PC-9 (cell line): ENCODE measurements at regions of chr13 and their contacts with region 1.

Region 1: DNA sequence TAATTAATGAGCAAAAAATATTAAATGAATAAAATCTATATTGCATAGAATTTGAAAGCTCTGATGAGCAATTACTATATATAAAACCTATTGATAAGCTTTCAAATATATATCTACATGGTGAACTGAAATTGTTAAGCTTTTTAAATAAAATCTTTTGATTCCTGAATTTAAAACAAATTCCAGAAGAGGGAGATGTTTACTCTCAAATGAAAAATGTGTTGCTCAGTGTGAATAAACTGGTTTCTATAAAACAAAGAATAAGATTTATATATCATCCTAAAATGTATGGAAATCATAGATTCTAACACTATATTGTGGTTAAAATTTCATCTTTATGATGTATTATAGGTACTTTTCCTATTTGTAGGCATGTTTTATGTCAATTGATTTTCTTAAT is 171.5 kb upstream of the SLITRK6 start:
- DNase-seq: no peak
- H3K4me3 ChIP-seq: no peak overlapping the region
- H3K27ac ChIP-seq: no peak overlapping the region
- H3K4me1 ChIP-seq: no peaks in the 10 kb centered on the region
- H3K27me3 ChIP-seq: no peaks in the 10 kb centered on the region
- CTCF ChIP-seq: peak; percentile 35; the same call in 1 of the 2 replicates

Region 2: GRCh38 chr13:86006317-86006716 is 35.6 kb after region 1 on chr13:
- CTCF ChIA-PET with region 1: interaction called, 17 read pairs
- POLR2A ChIA-PET with region 1: no interaction called
- intact Hi-C with region 1: no loop called
- DNase-seq: no peak
- H3K4me3 ChIP-seq: no peak overlapping the region
- H3K27ac ChIP-seq: no peak overlapping the region
- H3K4me1 ChIP-seq: no peaks in the 10 kb centered on the region
- H3K27me3 ChIP-seq: no peaks in the 10 kb centered on the region
- CTCF ChIP-seq: no peak